ENCODE measurements at regions of chr12 and their contacts with region 1.

Region 1: DNA sequence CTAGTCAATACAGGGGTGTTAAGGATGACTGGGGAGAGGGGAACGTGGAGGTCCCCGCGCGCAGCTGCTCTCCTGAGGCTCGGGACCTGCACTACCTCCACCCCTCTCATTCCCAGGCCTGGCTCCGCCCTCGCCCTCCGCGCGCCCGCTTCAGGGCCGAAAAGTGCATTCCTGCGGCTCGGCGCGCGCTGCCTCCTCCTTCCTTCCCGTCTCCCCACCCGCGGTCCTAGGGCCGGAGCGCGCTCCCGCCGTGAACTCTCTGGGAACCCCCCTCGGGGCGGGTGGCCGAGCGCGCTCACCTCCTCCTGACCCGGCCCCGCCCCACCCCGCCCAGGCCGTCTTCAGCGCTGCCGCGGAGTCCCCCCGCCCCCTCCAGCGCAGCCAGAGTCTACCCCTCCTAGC is 11.2 kb downstream of the RARG start:
- DNase-seq: peak; percentile 87
- ATAC-seq: peak; percentile 62
- H3K4me3 Mint-ChIP-seq: peak overlapping the region; percentile 89
- H3K27ac Mint-ChIP-seq: peak overlapping the region; percentile 96
- H3K4me1 Mint-ChIP-seq: peaks cover 69% of the 10 kb centered on the region
- H3K27me3 Mint-ChIP-seq: no peaks in the 10 kb centered on the region

Region 2: GRCh38 chr12:53122961-53123468 is 97.8 kb before region 1 on chr12:
- POLR2A ChIA-PET with region 1: no interaction called
- DNase-seq: no peak
- ATAC-seq: no peak
- H3K4me3 Mint-ChIP-seq: no peak overlapping the region
- H3K27ac Mint-ChIP-seq: peak overlapping the region; percentile 33
- H3K4me1 Mint-ChIP-seq: no peaks in the 10 kb centered on the region
- H3K27me3 Mint-ChIP-seq: no peaks in the 10 kb centered on the region

Region 3: GRCh38 chr12:53205747-53206419 is 14.9 kb before region 1 on chr12:
- POLR2A ChIA-PET with region 1: interaction called, 45 read pairs
- DNase-seq: peak; percentile 77
- ATAC-seq: peak; percentile 69
- H3K4me3 Mint-ChIP-seq: peak overlapping the region; percentile 92
- H3K27ac Mint-ChIP-seq: peak overlapping the region; percentile 92
- H3K4me1 Mint-ChIP-seq: peaks cover 50% of the 10 kb centered on the region
- H3K27me3 Mint-ChIP-seq: no peaks in the 10 kb centered on the region

Region 4: GRCh38 chr12:53243961-53244736 is 23.3 kb after region 1 on chr12:
- POLR2A ChIA-PET with region 1: interaction called, 12 read pairs
- DNase-seq: no peak
- ATAC-seq: no peak
- H3K4me3 Mint-ChIP-seq: no peak overlapping the region
- H3K27ac Mint-ChIP-seq: no peak overlapping the region
- H3K4me1 Mint-ChIP-seq: peaks cover 9% of the 10 kb centered on the region
- H3K27me3 Mint-ChIP-seq: peaks cover 22% of the 10 kb centered on the region

Region 5: DNA sequence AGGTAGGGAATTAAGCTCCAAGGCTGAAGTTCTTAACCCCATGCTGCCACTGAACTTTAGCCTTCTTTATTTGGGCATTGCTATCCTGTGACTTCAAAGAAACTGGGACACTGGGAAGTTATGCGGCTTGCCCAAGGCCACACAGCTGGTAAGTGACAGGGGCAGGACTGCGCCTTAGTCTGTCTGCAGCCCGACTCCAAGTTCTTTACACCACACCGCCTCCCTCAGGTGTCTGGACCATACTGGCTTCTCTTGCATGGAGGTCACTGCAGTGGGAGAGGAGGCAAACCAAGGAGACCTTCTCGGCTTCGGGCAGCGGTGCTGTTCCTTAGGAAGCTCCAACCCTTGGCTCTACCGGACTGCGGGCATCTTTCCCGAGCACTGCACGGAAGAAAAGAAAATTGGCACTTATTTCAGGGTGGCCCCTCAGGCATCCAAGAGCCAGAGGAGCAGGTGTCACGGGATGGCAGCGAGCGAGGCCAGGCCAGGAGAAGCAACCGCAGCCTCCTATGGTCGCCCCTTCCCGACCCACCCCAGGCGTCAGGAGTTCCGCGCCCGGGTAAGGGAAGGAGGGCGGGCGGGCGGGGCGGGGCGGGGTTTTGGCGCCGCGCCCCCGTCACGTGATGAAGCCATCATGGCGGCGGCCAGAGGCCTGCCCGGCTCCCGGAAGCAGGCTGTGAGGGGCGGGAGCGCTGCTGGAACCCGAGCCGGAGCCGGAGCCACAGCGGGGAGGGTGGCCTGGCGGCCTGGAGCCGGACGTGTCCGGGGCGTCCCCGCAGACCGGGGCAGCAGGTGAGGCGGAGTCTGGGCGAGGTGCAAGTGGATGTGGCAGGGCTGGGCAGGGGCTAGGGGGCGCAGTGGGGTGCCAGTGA is 30.9 kb after region 1 on chr12:
- POLR2A ChIA-PET with region 1: interaction called, 25 read pairs
- DNase-seq: peak; percentile 85
- ATAC-seq: peak; percentile 85
- H3K4me3 Mint-ChIP-seq: peak overlapping the region; percentile 98
- H3K27ac Mint-ChIP-seq: peak overlapping the region; percentile 95
- H3K4me1 Mint-ChIP-seq: peaks cover 41% of the 10 kb centered on the region
- H3K27me3 Mint-ChIP-seq: no peaks in the 10 kb centered on the region

Region 6: GRCh38 chr12:53305515-53305914 is 84.7 kb after region 1 on chr12:
- POLR2A ChIA-PET with region 1: no interaction called
- DNase-seq: no peak
- ATAC-seq: no peak
- H3K4me3 Mint-ChIP-seq: no peak overlapping the region
- H3K27ac Mint-ChIP-seq: no peak overlapping the region
- H3K4me1 Mint-ChIP-seq: peaks cover 19% of the 10 kb centered on the region
- H3K27me3 Mint-ChIP-seq: no peaks in the 10 kb centered on the region

Measured in activated naive CD8-positive, alpha-beta T cell treated with anti-CD3 and anti-CD28 coated beads, Interleukin-2, amount 10 ng/mL, durations not matched to agents 7 days and 5 days (primary cell).